ENCODE measurements at regions of chr12 and their contacts with region 1.

Region 1: GRCh38 chr12:124940549-124941527 is 26.4 kb upstream of the UBC start:
- DNase-seq: peak; percentile 88
- ATAC-seq: peak; percentile 57
- H3K4me3 ChIP-seq: peak overlapping the region in 4 of 5 experiments; percentile 58 to 80 (median 75)
- H3K4me3 Mint-ChIP-seq: no peak overlapping the region
- H3K27ac ChIP-seq: peak overlapping the region; percentile 44 to 61
- H3K27ac Mint-ChIP-seq: no peak overlapping the region
- H3K4me1 ChIP-seq: peaks cover 27 to 29% of the 10 kb centered on the region in 2 donors
- H3K4me1 Mint-ChIP-seq: peaks cover 14% of the 10 kb centered on the region
- H3K27me3 ChIP-seq: no peaks in the 10 kb centered on the region
- H3K27me3 Mint-ChIP-seq: no peaks in the 10 kb centered on the region
- CTCF ChIP-seq: peak; percentile 87

Region 2: GRCh38 chr12:124884587-124885438 is 56.0 kb before region 1 on chr12:
- CTCF ChIA-PET with region 1: interaction called, 19 read pairs
- POLR2A ChIA-PET with region 1: interaction called, 3 read pairs
- intact Hi-C with region 1: no loop called
- DNase-seq: peak; percentile 88
- ATAC-seq: peak; percentile 96
- H3K4me3 ChIP-seq: peak overlapping the region in 4 of 5 experiments; percentile 11 to 38 (median 28)
- H3K4me3 Mint-ChIP-seq: peak overlapping the region; percentile 83
- H3K27ac ChIP-seq: peak overlapping the region; percentile 59 to 67
- H3K27ac Mint-ChIP-seq: peak overlapping the region; percentile 95
- H3K4me1 ChIP-seq: peaks cover 55 to 70% of the 10 kb centered on the region in 2 donors
- H3K4me1 Mint-ChIP-seq: peaks cover 64% of the 10 kb centered on the region
- H3K27me3 ChIP-seq: peaks cover 0 to 3% (median 0%) of the 10 kb centered on the region in 4 experiments
- H3K27me3 Mint-ChIP-seq: no peaks in the 10 kb centered on the region
- CTCF ChIP-seq: no peak

Region 3: GRCh38 chr12:124917135-124917840 is 23.6 kb before region 1 on chr12:
- CTCF ChIA-PET with region 1: interaction called, 392 read pairs
- POLR2A ChIA-PET with region 1: interaction called, 58 read pairs
- intact Hi-C with region 1: loop called (anchors 1 kb)
- DNase-seq: peak; percentile 97
- ATAC-seq: peak; percentile 59
- H3K4me3 ChIP-seq: peak overlapping the region; percentile 36 to 73 (median 51)
- H3K4me3 Mint-ChIP-seq: peak overlapping the region; percentile 88
- H3K27ac ChIP-seq: peak overlapping the region; percentile 93 to 95
- H3K27ac Mint-ChIP-seq: peak overlapping the region; percentile 97
- H3K4me1 ChIP-seq: peaks cover 74 to 80% of the 10 kb centered on the region in 2 donors
- H3K4me1 Mint-ChIP-seq: peaks cover 88% of the 10 kb centered on the region
- H3K27me3 ChIP-seq: no peaks in the 10 kb centered on the region
- H3K27me3 Mint-ChIP-seq: no peaks in the 10 kb centered on the region
- CTCF ChIP-seq: no peak

Region 4: DNA sequence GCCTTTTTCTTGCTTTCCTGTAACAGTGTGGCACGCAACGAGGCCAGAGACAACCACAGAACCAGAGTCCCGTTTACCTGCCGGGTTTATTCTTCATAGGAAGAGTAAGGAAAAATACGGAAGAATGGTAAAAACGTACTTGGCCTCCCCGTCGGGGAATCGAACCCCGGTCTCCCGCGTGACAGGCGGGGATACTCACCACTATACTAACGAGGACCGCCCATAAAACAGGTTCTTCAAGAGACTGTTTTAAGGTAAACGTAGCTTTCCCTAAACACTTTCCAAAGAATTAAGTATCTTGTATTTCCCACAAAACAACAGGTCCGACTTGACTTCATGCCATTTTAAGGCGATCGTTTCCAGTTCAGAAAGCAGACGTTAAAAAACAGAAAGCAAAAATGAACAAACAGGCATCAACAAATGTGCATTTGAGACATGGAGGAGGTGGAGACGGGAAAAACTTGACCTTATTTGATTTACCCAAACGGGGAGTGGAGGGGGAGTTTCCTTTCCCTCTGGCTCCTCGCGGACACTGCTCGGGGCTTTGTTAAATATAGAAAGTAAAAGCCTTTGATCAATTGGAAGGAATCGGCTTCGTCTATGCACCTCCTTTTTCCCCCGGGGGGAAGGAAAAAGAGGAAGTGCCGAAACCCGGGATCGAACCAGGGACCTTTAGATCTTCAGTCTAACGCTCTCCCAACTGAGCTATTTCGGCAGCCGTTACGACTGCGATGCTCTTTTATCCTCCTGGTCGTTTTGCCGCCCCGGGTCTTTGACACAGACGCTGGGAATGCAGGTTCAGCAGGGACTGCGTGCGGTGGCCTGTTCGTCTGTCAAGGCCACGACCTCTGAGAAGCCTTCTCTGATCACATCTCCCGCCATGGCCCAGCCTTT is 13.4 kb before region 1 on chr12:
- CTCF ChIA-PET with region 1: interaction called, 392 read pairs
- POLR2A ChIA-PET with region 1: interaction called, 32 read pairs
- intact Hi-C with region 1: loop called (anchors 1 kb)
- DNase-seq: peak; percentile 94
- ATAC-seq: peak; percentile 88
- H3K4me3 ChIP-seq: peak overlapping the region; percentile 69 to 91 (median 77)
- H3K4me3 Mint-ChIP-seq: peak overlapping the region; percentile 93
- H3K27ac ChIP-seq: peak overlapping the region; percentile 43 to 50
- H3K27ac Mint-ChIP-seq: peak overlapping the region; percentile 99
- H3K4me1 ChIP-seq: peaks cover 16 to 24% of the 10 kb centered on the region in 2 donors
- H3K4me1 Mint-ChIP-seq: peaks cover 29% of the 10 kb centered on the region
- H3K27me3 ChIP-seq: no peaks in the 10 kb centered on the region
- H3K27me3 Mint-ChIP-seq: no peaks in the 10 kb centered on the region
- CTCF ChIP-seq: no peak

Region 5: GRCh38 chr12:125049093-125049458 is 108.2 kb after region 1 on chr12:
- CTCF ChIA-PET with region 1: interaction called, 5 read pairs
- POLR2A ChIA-PET with region 1: no interaction called
- intact Hi-C with region 1: loop called (anchors 2 kb)
- DNase-seq: no peak
- ATAC-seq: no peak
- H3K4me3 ChIP-seq: peak overlapping the region; percentile 40 to 82 (median 64)
- H3K4me3 Mint-ChIP-seq: peak overlapping the region; percentile 94
- H3K27ac ChIP-seq: peak overlapping the region in 1 of 2 donors; percentile 26
- H3K27ac Mint-ChIP-seq: peak overlapping the region; percentile 90
- H3K4me1 ChIP-seq: peaks cover 0 to 8% of the 10 kb centered on the region in 2 donors
- H3K4me1 Mint-ChIP-seq: peaks cover 7% of the 10 kb centered on the region
- H3K27me3 ChIP-seq: no peaks in the 10 kb centered on the region
- H3K27me3 Mint-ChIP-seq: no peaks in the 10 kb centered on the region
- CTCF ChIP-seq: no peak